CD14-positive monocyte (primary cell): ENCODE measurements at regions of chr2 and their contacts with region 1.

Region 1: GRCh38 chr2:127526149-127527000 is at the start of gene IWS1:
- DNase-seq: peak; percentile 94 to 98 (median 95)
- H3K4me3 ChIP-seq: peak within 1 kb of the TSS; percentile 90 to 95 (median 90)
- H3K4me3 Mint-ChIP-seq: peak within 1 kb of the TSS; percentile 86 to 95
- H3K27ac ChIP-seq: peak within 1 kb of the TSS; percentile 91 to 96
- H3K27ac Mint-ChIP-seq: peak within 1 kb of the TSS; percentile 96 to 100 (median 98)
- H3K4me1 ChIP-seq: peaks cover 18 to 23% of the 10 kb centered on the region in 2 donors
- H3K4me1 Mint-ChIP-seq: peaks cover 17% of the 10 kb centered on the region
- H3K27me3 ChIP-seq: no peaks in the 10 kb centered on the region
- H3K27me3 Mint-ChIP-seq: peaks cover 0 to 3% (median 0%) of the 10 kb centered on the region in 3 donors
- CTCF ChIP-seq: peak; percentile 7
- polyA plus RNA-seq, gene IWS1: 7.9 to 21.3 (median 15.6) TPM

Region 2: GRCh38 chr2:127313406-127313805 is 213.0 kb before region 1 on chr2:
- intact Hi-C with region 1: no loop called
- DNase-seq: peak; percentile 75 to 89 (median 79)
- H3K4me3 ChIP-seq: no peak overlapping the region
- H3K4me3 Mint-ChIP-seq: no peak overlapping the region
- H3K27ac ChIP-seq: peak overlapping the region; percentile 10 to 65
- H3K27ac Mint-ChIP-seq: peak overlapping the region; percentile 33 to 89 (median 73)
- H3K4me1 ChIP-seq: peaks cover 13 to 14% of the 10 kb centered on the region in 2 donors
- H3K4me1 Mint-ChIP-seq: peaks cover 15% of the 10 kb centered on the region
- H3K27me3 ChIP-seq: no peaks in the 10 kb centered on the region
- H3K27me3 Mint-ChIP-seq: peaks cover 0 to 2% (median 0%) of the 10 kb centered on the region in 3 donors
- CTCF ChIP-seq: no peak

Region 3: GRCh38 chr2:127422810-127423475 is 103.4 kb before region 1 on chr2:
- intact Hi-C with region 1: loop called in 1 of 2 experiments (anchors 10 kb)
- DNase-seq: peak; percentile 58 to 65 (median 64)
- H3K4me3 ChIP-seq: peak overlapping the region; percentile 4 to 59 (median 21)
- H3K4me3 Mint-ChIP-seq: peak overlapping the region; percentile 75 to 87
- H3K27ac ChIP-seq: no peak overlapping the region
- H3K27ac Mint-ChIP-seq: peak overlapping the region in 2 of 7 donors; percentile 30 to 73
- H3K4me1 ChIP-seq: peaks cover 17% of the 10 kb centered on the region in 2 donors
- H3K4me1 Mint-ChIP-seq: peaks cover 17% of the 10 kb centered on the region
- H3K27me3 ChIP-seq: peaks cover 7 to 29% of the 10 kb centered on the region in 2 donors
- H3K27me3 Mint-ChIP-seq: peaks cover 28 to 38% (median 37%) of the 10 kb centered on the region in 3 donors
- CTCF ChIP-seq: no peak

Region 4: DNA sequence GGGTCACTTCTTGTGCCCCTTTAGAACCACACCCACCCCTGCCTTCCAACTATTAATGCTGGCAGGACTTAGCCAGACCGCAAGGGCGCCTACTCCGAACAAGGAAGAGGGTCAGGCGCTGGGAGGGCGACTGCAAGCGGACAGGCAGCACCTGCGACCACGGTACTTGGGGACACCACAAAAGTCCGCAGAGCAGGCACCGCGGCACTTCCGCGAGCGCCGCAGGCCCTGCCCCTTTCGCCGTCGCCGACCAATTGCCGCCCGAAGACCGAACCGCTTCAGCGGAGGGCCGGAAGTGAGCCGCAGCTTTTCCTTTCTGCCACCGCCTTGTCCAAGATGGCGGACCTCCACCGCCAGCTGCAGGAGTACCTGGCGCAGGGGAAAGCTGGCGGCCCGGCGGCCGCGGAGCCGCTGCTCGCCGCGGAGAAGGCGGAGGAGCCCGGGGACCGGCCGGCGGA is 174.8 kb after region 1 on chr2 and contains the start of gene SFT2D3:
- intact Hi-C with region 1: loop called (anchors 10 kb)
- DNase-seq: peak; percentile 91 to 96 (median 95)
- H3K4me3 ChIP-seq: peak within 1 kb of the TSS; percentile 52 to 75 (median 59)
- H3K4me3 Mint-ChIP-seq: peak within 1 kb of the TSS; percentile 79 to 89
- H3K27ac ChIP-seq: peak within 1 kb of the TSS; percentile 96 to 100
- H3K27ac Mint-ChIP-seq: peak within 1 kb of the TSS; percentile 98 to 100 (median 99)
- H3K4me1 ChIP-seq: peaks cover 42% of the 10 kb centered on the region in 2 donors
- H3K4me1 Mint-ChIP-seq: peaks cover 40% of the 10 kb centered on the region
- H3K27me3 ChIP-seq: no peaks in the 10 kb centered on the region
- H3K27me3 Mint-ChIP-seq: peaks cover 0 to 2% (median 1%) of the 10 kb centered on the region in 3 donors
- CTCF ChIP-seq: no peak
- polyA plus RNA-seq, gene SFT2D3: 3.8 to 4.9 TPM in 2 of 3 donors, not detected in the other

Region 5: DNA sequence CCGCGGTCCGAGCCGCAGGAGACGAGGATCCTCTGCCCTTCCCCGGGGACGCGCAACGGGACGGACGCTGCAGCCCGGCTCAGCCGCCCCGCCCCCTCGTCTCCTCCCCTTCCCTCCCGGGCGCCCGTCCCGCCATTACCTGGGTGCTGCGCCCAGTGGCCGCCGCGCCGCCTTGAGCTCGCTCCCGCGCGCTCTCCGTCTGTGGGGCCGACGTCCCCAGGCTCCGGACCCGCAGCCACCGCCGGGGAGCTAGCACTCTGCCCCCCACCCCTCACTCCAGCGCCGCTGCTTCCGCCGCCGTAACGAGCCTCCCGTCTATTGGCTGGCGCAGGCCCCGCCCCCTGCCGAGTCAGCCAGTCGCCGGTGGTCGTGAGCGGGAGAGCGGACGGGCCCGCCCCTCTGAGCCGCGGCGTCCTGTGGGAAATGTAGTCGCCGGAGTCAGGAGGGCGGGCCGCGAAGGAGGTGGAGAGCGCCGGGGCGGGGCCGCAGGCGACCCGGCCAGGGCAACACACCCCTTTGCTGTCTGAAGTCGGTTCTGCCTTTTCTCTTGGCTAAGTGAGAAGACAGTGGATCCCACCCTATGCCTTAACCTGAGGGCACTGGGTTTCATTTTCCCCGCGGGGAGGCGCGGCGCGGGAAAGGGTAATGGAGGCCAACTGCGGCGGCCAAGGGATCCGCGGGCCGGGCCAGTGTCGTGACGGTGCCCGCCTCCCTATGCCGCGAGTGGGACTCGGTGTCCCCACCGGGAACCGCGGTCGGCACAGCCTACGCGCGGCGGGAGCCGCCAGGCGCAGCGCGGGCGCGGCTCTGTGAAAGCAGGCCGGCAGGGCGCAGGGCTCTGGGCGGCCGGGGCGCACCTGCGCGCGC is 501.7 kb after region 1 on chr2 and contains the start of gene SAP130:
- intact Hi-C with region 1: loop called in 1 of 2 experiments (anchors 5 kb)
- DNase-seq: peak; percentile 92 to 95 (median 93)
- H3K4me3 ChIP-seq: peak within 1 kb of the TSS; percentile 86 to 95 (median 92)
- H3K4me3 Mint-ChIP-seq: peak within 1 kb of the TSS; percentile 93 to 95
- H3K27ac ChIP-seq: peak within 1 kb of the TSS; percentile 58 to 83
- H3K27ac Mint-ChIP-seq: peak within 1 kb of the TSS; percentile 78 to 93 (median 89)
- H3K4me1 ChIP-seq: peaks cover 18 to 19% of the 10 kb centered on the region in 2 donors
- H3K4me1 Mint-ChIP-seq: peaks cover 22% of the 10 kb centered on the region
- H3K27me3 ChIP-seq: no peaks in the 10 kb centered on the region
- H3K27me3 Mint-ChIP-seq: peaks cover 0 to 4% (median 4%) of the 10 kb centered on the region in 3 donors
- CTCF ChIP-seq: no peak
- polyA plus RNA-seq, gene SAP130: 2.8 to 16.4 (median 6.4) TPM